ENCODE measurements at regions of chr15 and their contacts with region 1.

Region 1: DNA sequence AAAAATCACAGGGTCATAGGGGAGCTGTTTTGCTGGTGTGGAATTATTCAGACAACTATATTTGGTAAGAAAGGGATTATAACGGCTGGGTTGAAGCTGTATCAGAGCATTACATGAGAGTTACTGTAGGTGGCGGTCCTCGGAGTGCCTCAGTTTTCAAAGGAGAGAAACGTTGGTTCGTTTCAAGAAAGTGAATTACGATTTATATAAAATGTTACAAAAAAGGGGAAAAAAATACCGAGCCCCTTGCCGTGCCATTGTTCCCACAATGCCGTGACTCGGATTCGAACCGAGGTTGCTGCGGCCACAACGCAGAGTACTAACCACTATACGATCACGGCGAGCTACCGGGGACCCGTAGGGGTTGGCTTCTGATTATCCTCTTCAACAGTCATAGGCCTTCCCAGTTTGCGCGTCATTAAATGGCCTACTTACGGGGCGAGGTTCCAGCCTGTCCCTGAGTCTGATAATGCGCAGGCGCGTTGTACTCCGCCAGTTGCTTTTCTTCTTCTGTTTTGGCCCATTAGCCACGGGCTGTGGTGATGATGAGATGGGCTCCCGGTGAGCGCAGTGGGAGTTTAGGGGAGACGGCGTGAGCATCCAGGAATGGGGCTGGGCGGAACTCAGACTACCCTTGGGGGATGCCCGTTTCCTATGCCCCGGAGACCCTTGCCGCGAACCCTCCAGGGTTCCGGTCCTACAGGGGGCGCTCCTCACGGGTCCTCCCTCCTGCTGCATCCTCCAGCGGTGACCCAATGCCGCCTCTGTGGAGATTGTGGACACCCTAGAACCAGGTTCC is 10.8 kb upstream of the SHF start:
- DNase-seq: peak; percentile 69

Region 2: DNA sequence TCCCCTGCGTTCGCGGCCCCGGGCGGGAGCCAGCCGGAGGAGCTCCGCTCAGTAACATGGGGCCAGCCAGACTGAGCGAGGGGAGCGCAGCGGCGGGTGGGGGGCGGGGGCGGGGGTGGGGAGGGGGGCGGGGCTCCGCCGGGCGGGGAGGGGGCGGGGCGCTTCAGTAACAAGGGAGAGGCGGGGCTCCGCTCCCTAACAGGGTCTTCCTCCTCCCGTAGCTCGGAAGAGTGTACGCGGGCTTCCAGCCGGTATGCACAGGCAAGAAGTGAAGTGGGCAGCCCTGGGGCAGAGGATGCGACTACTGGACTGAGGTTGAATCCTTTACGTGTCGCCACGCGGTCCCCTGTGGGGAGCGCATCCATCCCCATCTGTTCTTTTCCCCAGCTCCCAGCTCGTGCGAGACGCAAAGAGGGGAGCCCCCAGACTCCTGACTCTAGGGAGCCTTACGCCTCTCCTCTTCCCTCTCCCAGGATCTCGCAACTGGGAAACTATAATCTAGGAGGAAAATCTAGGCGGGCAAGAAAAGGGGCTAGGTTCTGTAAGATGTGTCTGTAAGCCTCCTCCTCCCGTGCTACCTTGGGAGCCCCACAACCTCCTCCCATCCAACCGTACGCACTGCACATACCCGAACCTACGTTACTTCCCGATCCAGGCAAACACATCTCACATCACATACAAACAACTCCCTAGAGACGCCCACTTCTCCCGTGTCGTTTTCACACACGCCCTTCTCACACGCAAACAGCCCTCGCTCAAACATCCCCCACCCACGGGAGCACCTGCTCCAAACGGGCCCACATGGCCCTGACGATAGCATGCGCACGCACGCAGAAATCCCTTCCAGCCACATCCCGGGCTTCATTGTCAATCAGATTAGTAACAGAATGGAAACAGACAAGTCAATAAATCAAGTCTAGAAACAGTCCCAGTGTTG is 10.4 kb before region 1 on chr15 and contains the start of gene SHF:
- CTCF ChIA-PET with region 1: interaction called, 3 read pairs
- POLR2A ChIA-PET with region 1: interaction called, 17 read pairs
- DNase-seq: peak; percentile 70

Measured in HEK293T (cell line).